MCF 10A (cell line): ENCODE measurements at regions of chr6 and their contacts with region 1.

Region 1: DNA sequence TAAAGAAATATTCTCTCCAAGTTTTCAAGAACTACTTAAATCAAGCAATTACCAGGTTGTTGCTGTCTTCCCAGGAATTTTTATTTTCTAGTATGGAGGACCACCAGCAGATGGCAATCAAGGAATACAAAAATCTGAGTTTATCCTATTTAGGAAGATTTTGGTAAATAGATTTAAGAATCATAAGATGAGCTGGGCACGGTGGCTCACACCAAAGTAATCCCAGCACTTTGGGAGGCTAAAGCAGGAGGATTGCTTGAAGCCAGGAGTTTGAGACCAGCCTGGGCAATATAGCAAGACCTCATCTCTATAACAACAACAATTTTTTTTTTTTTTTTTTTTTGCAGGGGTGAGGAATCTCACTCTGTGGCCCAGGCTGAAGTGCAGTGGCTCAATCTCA is 19.3 kb upstream of the SEC63 start:
- DNase-seq: peak; percentile 43
- H3K4me3 Mint-ChIP-seq: no peak overlapping the region
- H3K27ac Mint-ChIP-seq: no peak overlapping the region
- H3K4me1 Mint-ChIP-seq: peaks cover 3% of the 10 kb centered on the region
- H3K27me3 Mint-ChIP-seq: no peaks in the 10 kb centered on the region
- CTCF ChIP-seq: peak; percentile 45

Region 2: GRCh38 chr6:107753778-107754177 is 223.5 kb before region 1 on chr6:
- CTCF ChIA-PET with region 1: no interaction called
- POLR2A ChIA-PET with region 1: no interaction called
- intact Hi-C with region 1: no loop called
- DNase-seq: no peak
- H3K4me3 Mint-ChIP-seq: no peak overlapping the region
- H3K27ac Mint-ChIP-seq: no peak overlapping the region
- H3K4me1 Mint-ChIP-seq: no peaks in the 10 kb centered on the region
- H3K27me3 Mint-ChIP-seq: peaks cover 47% of the 10 kb centered on the region
- CTCF ChIP-seq: no peak

Region 3: DNA sequence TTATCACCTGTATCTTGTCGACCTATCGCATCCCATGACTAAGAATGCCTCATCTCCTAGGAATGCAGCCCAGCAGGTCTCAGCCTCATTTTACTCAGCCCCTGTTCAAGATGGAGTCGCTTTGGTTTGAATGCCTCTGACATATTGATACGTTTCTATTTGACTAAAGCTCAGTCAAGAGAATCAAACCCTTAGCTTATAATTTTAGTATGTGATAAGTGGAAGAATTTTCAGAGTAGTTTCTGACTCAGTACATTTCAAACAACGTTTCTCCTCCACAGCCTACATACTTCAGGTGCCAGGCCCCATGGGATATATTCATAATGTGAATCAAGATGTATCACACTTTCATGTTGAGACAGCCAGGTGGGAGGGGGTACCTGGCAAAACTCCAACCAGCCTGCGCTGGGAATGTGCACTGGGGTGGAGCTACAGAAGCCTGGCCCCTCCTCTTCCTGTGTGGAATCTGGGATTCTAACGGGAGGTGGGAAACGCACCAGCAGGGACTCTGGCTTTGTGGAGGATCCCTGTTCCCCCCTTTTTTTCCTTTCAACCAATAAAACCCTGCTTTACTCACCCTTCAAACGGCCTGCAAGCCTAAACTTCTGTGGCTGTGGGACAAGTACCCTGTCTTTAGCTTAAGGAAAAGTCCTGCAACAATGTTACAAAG is 12.5 kb before region 1 on chr6:
- CTCF ChIA-PET with region 1: interaction called, 21 read pairs
- POLR2A ChIA-PET with region 1: interaction called, 4 read pairs
- intact Hi-C with region 1: no loop called
- DNase-seq: peak; percentile 70
- H3K4me3 Mint-ChIP-seq: no peak overlapping the region
- H3K27ac Mint-ChIP-seq: peak overlapping the region; percentile 12
- H3K4me1 Mint-ChIP-seq: no peaks in the 10 kb centered on the region
- H3K27me3 Mint-ChIP-seq: no peaks in the 10 kb centered on the region
- CTCF ChIP-seq: no peak

Region 4: DNA sequence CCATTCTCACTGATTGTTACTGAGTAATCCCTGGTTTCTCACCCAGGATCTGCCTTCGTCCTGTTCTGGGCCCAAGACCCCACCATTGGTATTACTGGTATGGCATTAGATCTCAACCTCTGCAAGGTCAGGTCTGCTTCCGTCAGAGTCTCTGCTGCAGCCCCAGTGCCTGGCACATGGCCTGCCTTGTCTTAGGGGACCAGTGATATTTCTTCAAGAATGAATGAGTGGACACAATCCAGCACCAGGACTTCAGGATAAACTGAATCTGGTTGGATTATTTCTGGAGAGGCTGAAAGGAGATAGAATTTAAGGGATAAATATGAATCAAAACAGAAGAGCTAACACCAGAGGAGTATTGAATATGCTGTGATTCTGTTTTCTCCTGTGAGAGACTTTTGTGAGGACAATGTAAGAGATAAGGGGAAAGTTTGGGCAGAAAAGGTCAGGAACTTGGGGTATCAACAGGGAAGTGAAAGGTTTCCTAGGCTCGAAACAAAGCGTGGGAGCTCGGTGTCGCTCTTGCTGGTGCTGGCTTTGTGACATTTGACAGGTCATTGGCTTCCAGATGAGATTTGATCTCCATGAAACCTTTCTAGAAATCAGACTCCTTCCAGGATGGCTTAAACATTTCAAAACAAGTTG is 43.3 kb after region 1 on chr6:
- CTCF ChIA-PET with region 1: interaction called, 11 read pairs
- POLR2A ChIA-PET with region 1: no interaction called
- intact Hi-C with region 1: no loop called
- DNase-seq: no peak
- H3K4me3 Mint-ChIP-seq: no peak overlapping the region
- H3K27ac Mint-ChIP-seq: no peak overlapping the region
- H3K4me1 Mint-ChIP-seq: no peaks in the 10 kb centered on the region
- H3K27me3 Mint-ChIP-seq: no peaks in the 10 kb centered on the region
- CTCF ChIP-seq: no peak

Region 5: GRCh38 chr6:108052706-108053105 is 75.4 kb after region 1 on chr6:
- CTCF ChIA-PET with region 1: interaction called, 160 read pairs
- POLR2A ChIA-PET with region 1: interaction called, 6 read pairs
- intact Hi-C with region 1: loop called (anchors 1 kb)
- DNase-seq: no peak
- H3K4me3 Mint-ChIP-seq: no peak overlapping the region
- H3K27ac Mint-ChIP-seq: no peak overlapping the region
- H3K4me1 Mint-ChIP-seq: no peaks in the 10 kb centered on the region
- H3K27me3 Mint-ChIP-seq: no peaks in the 10 kb centered on the region
- CTCF ChIP-seq: no peak

Region 6: DNA sequence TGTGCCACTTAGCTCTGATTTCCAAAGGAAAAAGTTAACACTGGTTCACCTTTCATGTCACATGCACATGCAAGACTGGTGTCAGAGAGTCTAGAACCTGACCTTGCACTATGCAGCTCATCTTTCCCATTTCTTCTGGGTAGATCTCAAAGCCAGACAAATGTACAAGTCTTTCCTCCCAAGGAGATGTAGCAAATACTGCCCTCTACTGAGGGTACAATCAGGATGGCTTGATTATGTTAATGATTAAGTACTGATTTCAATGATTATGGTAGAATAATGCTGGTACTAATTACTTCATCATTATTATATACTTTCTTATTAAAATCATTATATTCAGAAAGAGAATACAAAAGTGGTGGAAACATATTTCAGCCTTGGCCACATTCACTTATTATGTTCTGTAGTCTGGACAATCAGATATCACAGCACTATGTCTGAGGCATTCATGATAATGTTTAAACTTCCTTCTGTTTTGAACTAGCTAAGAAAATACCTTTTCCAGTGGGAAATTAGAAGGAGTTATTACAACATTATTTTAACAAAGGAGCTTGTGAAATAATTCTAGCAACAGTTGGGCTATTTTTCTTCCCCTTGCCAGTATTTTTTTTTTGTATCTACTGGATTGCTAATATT is 515.0 kb after region 1 on chr6:
- CTCF ChIA-PET with region 1: interaction called, 16 read pairs
- POLR2A ChIA-PET with region 1: no interaction called
- intact Hi-C with region 1: no loop called
- DNase-seq: peak; percentile 59
- H3K4me3 Mint-ChIP-seq: no peak overlapping the region
- H3K27ac Mint-ChIP-seq: no peak overlapping the region
- H3K4me1 Mint-ChIP-seq: no peaks in the 10 kb centered on the region
- H3K27me3 Mint-ChIP-seq: no peaks in the 10 kb centered on the region
- CTCF ChIP-seq: peak; percentile 57

Region 7: GRCh38 chr6:108526739-108527174 is 549.5 kb after region 1 on chr6:
- CTCF ChIA-PET with region 1: interaction called, 22 read pairs
- POLR2A ChIA-PET with region 1: no interaction called
- intact Hi-C with region 1: loop called (anchors 1 kb)
- DNase-seq: peak; percentile 50
- H3K4me3 Mint-ChIP-seq: no peak overlapping the region
- H3K27ac Mint-ChIP-seq: no peak overlapping the region
- H3K4me1 Mint-ChIP-seq: no peaks in the 10 kb centered on the region
- H3K27me3 Mint-ChIP-seq: no peaks in the 10 kb centered on the region
- CTCF ChIP-seq: peak; percentile 71